ENCODE measurements at regions of chr11 and their contacts with region 1.

Region 1: GRCh38 chr11:100316952-100317351 is 370.1 kb upstream of the ARHGAP42 start:
- DNase-seq: no peak
- H3K4me3 ChIP-seq: no peak overlapping the region
- H3K27ac ChIP-seq: no peak overlapping the region
- H3K27me3 ChIP-seq: no peaks in the 10 kb centered on the region
- CTCF ChIP-seq: no peak

Region 2: GRCh38 chr11:100119176-100119575 is 197.8 kb before region 1 on chr11:
- intact Hi-C with region 1: loop called in 1 of 2 experiments (anchors 5 kb)
- DNase-seq: no peak
- H3K4me3 ChIP-seq: no peak overlapping the region
- H3K27ac ChIP-seq: no peak overlapping the region
- H3K27me3 ChIP-seq: no peaks in the 10 kb centered on the region
- CTCF ChIP-seq: no peak

Region 3: GRCh38 chr11:100151944-100152343 is 165.0 kb before region 1 on chr11:
- intact Hi-C with region 1: no loop called
- DNase-seq: no peak
- H3K4me3 ChIP-seq: no peak overlapping the region
- H3K27ac ChIP-seq: no peak overlapping the region
- H3K27me3 ChIP-seq: no peaks in the 10 kb centered on the region
- CTCF ChIP-seq: no peak

Measured in dorsolateral prefrontal cortex (tissue), 120 donors.